ENCODE measurements at regions of chr3 and their contacts with region 1.

Region 1: DNA sequence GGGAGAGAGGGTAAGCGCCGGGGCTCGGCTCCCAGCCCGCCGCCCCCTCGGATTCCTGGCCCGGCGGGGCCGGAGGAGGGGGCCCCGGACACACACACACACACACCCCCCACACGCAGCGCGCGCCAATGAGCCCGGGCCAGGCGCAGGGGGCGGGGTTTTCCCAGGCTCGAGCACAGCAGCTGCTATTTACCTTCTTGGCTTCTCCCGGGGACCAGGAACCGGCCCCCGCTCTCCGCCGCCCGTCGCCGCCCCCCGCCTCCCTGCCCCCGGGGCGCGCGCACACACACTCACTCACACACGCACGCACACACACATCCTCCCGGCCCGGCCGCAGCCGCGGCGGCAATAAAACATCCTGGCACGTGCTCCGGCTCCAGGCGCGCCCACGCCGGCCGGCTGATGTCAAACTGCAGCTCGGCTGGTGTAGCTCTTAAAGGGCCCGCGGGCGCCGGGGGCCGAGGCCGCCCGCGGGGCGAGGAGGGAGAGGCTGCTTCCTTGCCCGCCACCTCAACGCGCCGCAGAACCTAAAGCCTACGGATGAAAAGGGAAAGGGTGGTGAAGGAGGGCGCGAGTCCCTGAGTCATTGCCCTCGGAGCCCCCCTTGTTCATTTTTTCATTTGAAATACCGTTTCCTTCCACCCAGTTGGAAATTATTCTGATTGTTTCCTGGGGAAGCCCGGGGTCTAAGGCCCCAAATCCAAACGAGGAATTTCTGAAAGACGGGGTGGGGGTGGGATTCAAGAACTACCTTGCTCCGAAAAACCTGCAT is 1.0 kb upstream of the HES1 start:
- DNase-seq: peak; percentile 92
- ATAC-seq: peak; percentile 67
- H3K4me3 Mint-ChIP-seq: peak overlapping the region; percentile 72
- H3K27ac Mint-ChIP-seq: peak overlapping the region; percentile 39
- H3K4me1 Mint-ChIP-seq: peaks cover 45% of the 10 kb centered on the region
- H3K27me3 Mint-ChIP-seq: peaks cover 60% of the 10 kb centered on the region

Region 2: DNA sequence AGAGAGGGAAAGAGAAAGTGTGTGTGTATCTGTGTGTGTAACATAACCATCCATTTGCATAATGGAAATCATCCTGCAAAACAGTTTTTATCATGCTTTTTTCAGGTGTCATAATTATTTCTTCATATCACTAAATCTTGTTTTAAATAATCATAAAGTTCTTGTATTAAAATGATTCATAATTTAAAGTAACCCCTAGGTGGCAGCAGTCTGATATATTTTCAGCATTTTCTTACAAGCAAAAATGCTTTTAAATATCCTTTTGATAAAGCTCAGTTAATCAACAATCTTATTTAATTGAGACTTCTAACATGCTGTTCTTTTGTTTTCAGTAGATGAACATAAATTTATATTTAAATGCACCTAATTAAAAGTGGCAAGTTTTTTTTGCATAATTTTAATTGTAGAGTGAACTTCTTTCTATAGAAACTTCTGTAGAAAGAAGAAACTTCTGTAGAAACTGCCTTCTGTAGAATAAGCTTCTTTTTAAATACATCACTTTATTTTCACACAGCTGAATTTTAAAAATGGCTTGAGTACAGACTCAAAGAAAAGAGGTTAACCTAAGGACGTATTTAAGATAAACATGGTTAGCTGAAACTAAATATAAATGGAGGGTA is 469.5 kb before region 1 on chr3:
- CTCF ChIA-PET with region 1: interaction called, 5 read pairs
- POLR2A ChIA-PET with region 1: no interaction called
- intact Hi-C with region 1: loop called (anchors 2 to 10 kb)
- DNase-seq: no peak
- ATAC-seq: no peak
- H3K4me3 Mint-ChIP-seq: no peak overlapping the region
- H3K27ac Mint-ChIP-seq: no peak overlapping the region
- H3K4me1 Mint-ChIP-seq: no peaks in the 10 kb centered on the region
- H3K27me3 Mint-ChIP-seq: no peaks in the 10 kb centered on the region

Region 3: DNA sequence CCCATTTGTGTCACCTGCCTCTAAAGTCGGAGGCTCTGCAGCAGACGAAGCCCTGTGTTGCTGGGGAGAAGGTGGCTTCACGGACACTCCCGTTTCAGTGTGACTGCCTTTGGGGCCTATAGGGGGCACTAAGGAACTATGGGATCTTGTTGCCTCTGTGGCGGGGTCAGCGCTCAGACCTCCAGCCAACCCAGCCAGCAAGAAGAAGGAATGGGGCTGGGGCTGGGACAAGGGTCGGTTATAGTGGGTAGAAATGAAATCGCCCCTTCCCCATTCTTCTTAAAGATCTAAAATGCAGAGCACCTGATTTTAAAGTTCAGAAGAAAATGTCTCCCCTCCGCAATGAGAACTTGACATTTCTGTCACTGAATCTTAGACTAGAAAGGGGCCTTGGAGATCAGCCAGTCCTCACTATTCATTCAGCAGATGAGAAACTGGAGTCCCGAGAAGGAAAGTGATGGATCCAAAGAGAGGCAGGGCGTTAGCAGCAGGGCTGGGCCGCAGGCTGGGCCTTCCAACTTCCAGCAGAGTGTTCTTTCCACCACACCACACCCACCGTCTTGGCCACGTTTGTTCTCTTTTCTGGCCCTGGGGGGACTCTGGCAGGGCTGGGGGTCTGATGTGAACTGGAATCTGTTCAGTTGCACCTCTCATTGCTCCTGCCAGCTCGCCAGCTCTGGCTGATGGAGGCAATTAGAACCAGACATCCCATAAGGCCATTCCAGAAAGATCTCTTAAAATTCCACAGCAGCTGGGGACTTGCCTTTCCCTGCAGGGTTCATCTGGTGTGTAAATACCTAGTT is 346.6 kb before region 1 on chr3:
- CTCF ChIA-PET with region 1: no interaction called
- POLR2A ChIA-PET with region 1: no interaction called
- intact Hi-C with region 1: loop called (anchors 1 to 2 kb)
- DNase-seq: peak; percentile 47
- ATAC-seq: peak; percentile 75
- H3K4me3 Mint-ChIP-seq: no peak overlapping the region
- H3K27ac Mint-ChIP-seq: no peak overlapping the region
- H3K4me1 Mint-ChIP-seq: no peaks in the 10 kb centered on the region
- H3K27me3 Mint-ChIP-seq: peaks cover 10% of the 10 kb centered on the region

Region 4: GRCh38 chr3:194070634-194071409 is 64.1 kb before region 1 on chr3:
- CTCF ChIA-PET with region 1: no interaction called
- POLR2A ChIA-PET with region 1: no interaction called
- intact Hi-C with region 1: loop called (anchors 1 to 5 kb)
- DNase-seq: peak; percentile 87
- ATAC-seq: peak; percentile 82
- H3K4me3 Mint-ChIP-seq: peak overlapping the region; percentile 55
- H3K27ac Mint-ChIP-seq: peak overlapping the region; percentile 10
- H3K4me1 Mint-ChIP-seq: peaks cover 24% of the 10 kb centered on the region
- H3K27me3 Mint-ChIP-seq: peaks cover 34% of the 10 kb centered on the region

Region 5: GRCh38 chr3:194315088-194315964 is 180.4 kb after region 1 on chr3:
- CTCF ChIA-PET with region 1: interaction called, 8 read pairs
- POLR2A ChIA-PET with region 1: no interaction called
- intact Hi-C with region 1: loop called in 1 of 2 experiments (anchors 2 kb)
- DNase-seq: peak; percentile 89
- ATAC-seq: peak; percentile 89
- H3K4me3 Mint-ChIP-seq: peak overlapping the region; percentile 43
- H3K27ac Mint-ChIP-seq: peak overlapping the region; percentile 3
- H3K4me1 Mint-ChIP-seq: peaks cover 8% of the 10 kb centered on the region
- H3K27me3 Mint-ChIP-seq: peaks cover 21% of the 10 kb centered on the region

Region 6: DNA sequence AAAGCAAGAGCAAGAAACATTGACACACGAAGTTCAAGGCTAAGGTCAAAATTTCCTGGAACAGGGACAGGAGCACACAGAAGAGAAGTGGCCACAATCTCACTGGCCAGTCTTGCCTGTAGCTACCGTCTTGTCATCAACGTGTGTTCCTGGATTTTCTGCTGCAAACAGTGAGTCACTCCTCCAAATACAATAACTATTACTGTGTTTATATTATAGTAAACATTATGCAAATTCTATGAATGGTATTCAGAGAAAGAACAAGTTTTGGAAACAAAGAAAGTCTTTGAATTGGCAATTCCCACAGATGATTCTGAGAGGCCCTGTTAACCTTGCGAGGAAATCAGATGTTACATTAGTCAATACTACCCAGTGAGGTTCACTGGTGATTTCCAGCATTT is 771.3 kb after region 1 on chr3:
- CTCF ChIA-PET with region 1: no interaction called
- POLR2A ChIA-PET with region 1: no interaction called
- intact Hi-C with region 1: no loop called
- DNase-seq: no peak
- ATAC-seq: peak; percentile 44
- H3K4me3 Mint-ChIP-seq: no peak overlapping the region
- H3K27ac Mint-ChIP-seq: no peak overlapping the region
- H3K4me1 Mint-ChIP-seq: peaks cover 5% of the 10 kb centered on the region
- H3K27me3 Mint-ChIP-seq: peaks cover 21% of the 10 kb centered on the region